ENCODE measurements at regions of chr19 and their contacts with region 1.

Region 1: GRCh38 chr19:12789904-12790619 is 1.2 kb upstream of the JUNB start:
- DNase-seq: peak; percentile 94
- H3K4me3 Mint-ChIP-seq: peak overlapping the region; percentile 93
- H3K27ac Mint-ChIP-seq: peak overlapping the region; percentile 94
- H3K4me1 Mint-ChIP-seq: peaks cover 39% of the 10 kb centered on the region
- H3K27me3 Mint-ChIP-seq: no peaks in the 10 kb centered on the region

Region 2: GRCh38 chr19:12757544-12758274 is 32.4 kb before region 1 on chr19:
- CTCF ChIA-PET with region 1: interaction called, 211 read pairs
- POLR2A ChIA-PET with region 1: no interaction called
- DNase-seq: peak; percentile 64
- H3K4me3 Mint-ChIP-seq: peak overlapping the region; percentile 27
- H3K27ac Mint-ChIP-seq: no peak overlapping the region
- H3K4me1 Mint-ChIP-seq: peaks cover 13% of the 10 kb centered on the region
- H3K27me3 Mint-ChIP-seq: peaks cover 4% of the 10 kb centered on the region

Region 3: DNA sequence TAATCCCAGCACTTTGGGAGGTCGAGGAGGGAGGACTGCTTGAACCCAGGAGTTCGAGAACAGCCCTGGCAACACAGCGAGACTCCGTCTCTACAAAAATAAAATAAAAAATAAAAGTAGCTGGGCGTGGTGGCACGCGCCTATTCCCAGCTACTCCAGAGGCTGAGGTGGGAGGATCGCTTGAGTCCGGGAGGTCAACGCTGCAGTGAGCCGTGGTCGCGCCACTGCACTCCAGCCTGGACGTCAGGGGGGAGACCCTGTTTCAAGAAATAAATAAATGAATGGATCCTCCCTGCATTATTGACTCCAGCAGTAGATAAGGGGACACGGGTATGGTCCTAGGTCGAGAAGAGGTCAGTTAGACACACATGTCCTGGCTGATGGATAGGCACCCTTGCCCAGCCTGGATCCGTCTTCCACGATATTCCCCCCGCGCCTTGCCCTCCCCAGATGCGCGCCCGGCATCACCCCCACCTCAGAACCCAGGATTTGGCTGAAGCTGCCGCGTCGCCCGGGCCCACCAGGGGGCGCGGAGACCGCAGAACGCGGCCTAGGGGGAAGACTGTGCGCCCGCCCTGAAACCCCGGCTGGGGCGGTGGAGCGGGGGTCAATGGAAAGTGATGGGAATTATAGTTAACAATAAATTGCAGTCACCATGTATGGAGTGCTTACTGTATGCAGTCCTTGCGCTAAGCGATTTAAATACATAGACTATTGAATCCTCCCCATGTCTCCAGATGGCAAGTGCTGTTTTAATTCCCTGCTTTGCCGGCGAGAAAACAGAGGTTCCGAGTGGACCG is 12.6 kb before region 1 on chr19:
- CTCF ChIA-PET with region 1: interaction called, 68 read pairs
- POLR2A ChIA-PET with region 1: interaction called, 50 read pairs
- DNase-seq: peak; percentile 77
- H3K4me3 Mint-ChIP-seq: peak overlapping the region; percentile 79
- H3K27ac Mint-ChIP-seq: peak overlapping the region; percentile 89
- H3K4me1 Mint-ChIP-seq: peaks cover 50% of the 10 kb centered on the region
- H3K27me3 Mint-ChIP-seq: no peaks in the 10 kb centered on the region

Region 4: GRCh38 chr19:12833418-12833737 is 43.3 kb after region 1 on chr19:
- CTCF ChIA-PET with region 1: no interaction called
- POLR2A ChIA-PET with region 1: no interaction called
- DNase-seq: no peak
- H3K4me3 Mint-ChIP-seq: peak overlapping the region; percentile 11
- H3K27ac Mint-ChIP-seq: peak overlapping the region; percentile 27
- H3K4me1 Mint-ChIP-seq: peaks cover 20% of the 10 kb centered on the region
- H3K27me3 Mint-ChIP-seq: peaks cover 75% of the 10 kb centered on the region

Region 5: GRCh38 chr19:12867120-12868099 is 77.3 kb after region 1 on chr19:
- CTCF ChIA-PET with region 1: no interaction called
- POLR2A ChIA-PET with region 1: no interaction called
- DNase-seq: peak; percentile 68
- H3K4me3 Mint-ChIP-seq: peak overlapping the region; percentile 59
- H3K27ac Mint-ChIP-seq: peak overlapping the region; percentile 36
- H3K4me1 Mint-ChIP-seq: peaks cover 20% of the 10 kb centered on the region
- H3K27me3 Mint-ChIP-seq: peaks cover 2% of the 10 kb centered on the region

Region 6: DNA sequence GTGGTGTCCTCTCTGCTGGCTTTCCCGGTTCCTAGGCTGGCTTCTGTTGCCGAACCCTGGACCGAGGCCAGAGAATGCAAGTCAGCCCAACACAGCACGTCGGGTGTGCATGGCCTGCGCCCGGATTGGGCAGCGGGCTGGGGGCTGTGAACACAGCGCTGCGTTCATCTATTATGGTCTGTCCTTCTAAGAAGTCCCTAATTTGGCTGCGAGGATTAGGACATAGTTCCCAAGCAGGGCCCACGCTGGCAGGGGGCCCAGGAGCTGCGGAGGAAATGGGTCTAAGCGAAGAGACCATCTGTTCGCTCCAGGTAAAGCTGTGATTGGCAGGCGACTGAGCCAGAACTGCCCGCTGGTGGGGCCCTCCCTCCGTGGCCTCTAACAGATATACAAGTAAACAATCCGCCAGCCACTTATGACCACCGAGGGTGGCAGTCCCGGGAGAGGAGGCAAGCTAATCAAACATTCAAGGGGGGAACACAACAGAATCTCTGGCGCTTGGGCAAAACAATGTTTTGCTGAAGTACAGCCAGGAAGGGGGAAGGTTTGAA is 123.0 kb after region 1 on chr19:
- CTCF ChIA-PET with region 1: no interaction called
- POLR2A ChIA-PET with region 1: no interaction called
- DNase-seq: no peak
- H3K4me3 Mint-ChIP-seq: no peak overlapping the region
- H3K27ac Mint-ChIP-seq: peak overlapping the region; percentile 98
- H3K4me1 Mint-ChIP-seq: peaks cover 25% of the 10 kb centered on the region
- H3K27me3 Mint-ChIP-seq: no peaks in the 10 kb centered on the region

Region 7: GRCh38 chr19:12956446-12957388 is 166.7 kb after region 1 on chr19 and contains the start of gene GADD45GIP1:
- CTCF ChIA-PET with region 1: no interaction called
- POLR2A ChIA-PET with region 1: interaction called, 10 read pairs
- DNase-seq: peak; percentile 84
- H3K4me3 Mint-ChIP-seq: peak within 1 kb of the TSS; percentile 87
- H3K27ac Mint-ChIP-seq: peak within 1 kb of the TSS; percentile 98
- H3K4me1 Mint-ChIP-seq: peaks cover 32% of the 10 kb centered on the region
- H3K27me3 Mint-ChIP-seq: no peaks in the 10 kb centered on the region
- total RNA-seq, gene GADD45GIP1: 14.9 to 16.5 TPM

Measured in activated CD4-positive, alpha-beta T cell treated with anti-CD3 and anti-CD28 coated beads, Interleukin-2, amount 10 ng/mL, durations not matched to agents 7 days and 5 days (primary cell).